Transverse colon (tissue), 4 donors: ENCODE measurements at regions of chr5 and their contacts with region 1.

Region 1: DNA sequence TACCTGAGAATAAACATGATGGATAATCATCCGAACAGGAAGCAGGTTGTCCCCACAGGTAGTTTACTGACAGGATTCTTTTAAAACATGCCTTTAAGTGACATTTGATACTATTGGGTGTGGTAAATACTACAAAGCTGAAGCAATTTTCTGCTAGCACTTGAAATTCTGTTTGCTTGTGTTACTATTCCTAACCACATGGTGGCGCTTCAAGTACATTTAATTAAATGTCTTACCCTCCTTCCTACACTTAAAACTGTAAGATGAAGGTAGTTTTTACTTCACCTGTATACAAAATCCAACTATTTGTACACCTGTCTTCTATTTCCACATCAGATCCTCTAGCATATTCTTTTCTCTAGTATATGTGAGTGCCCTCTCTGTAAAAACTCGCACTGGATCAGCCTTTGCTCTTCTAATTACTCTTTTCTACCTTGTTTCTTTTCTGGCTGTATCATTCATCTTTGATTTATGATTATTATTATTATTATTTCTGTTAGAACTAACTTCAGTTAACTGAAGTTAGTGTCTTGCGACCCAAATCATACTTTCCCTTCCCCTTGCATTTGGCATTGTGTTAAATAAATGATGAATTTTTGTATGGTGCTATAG is 18.4 kb downstream of the SLC25A46 start:
- DNase-seq: no peak
- H3K4me3 ChIP-seq: no peak overlapping the region
- H3K27ac ChIP-seq: no peak overlapping the region
- H3K4me1 ChIP-seq: no peaks in the 10 kb centered on the region
- H3K27me3 ChIP-seq: no peaks in the 10 kb centered on the region
- CTCF ChIP-seq: peak; percentile 53 to 75 (median 65)
- EP300 ChIP-seq: no peak
- POLR2A ChIP-seq: no peak

Region 2: DNA sequence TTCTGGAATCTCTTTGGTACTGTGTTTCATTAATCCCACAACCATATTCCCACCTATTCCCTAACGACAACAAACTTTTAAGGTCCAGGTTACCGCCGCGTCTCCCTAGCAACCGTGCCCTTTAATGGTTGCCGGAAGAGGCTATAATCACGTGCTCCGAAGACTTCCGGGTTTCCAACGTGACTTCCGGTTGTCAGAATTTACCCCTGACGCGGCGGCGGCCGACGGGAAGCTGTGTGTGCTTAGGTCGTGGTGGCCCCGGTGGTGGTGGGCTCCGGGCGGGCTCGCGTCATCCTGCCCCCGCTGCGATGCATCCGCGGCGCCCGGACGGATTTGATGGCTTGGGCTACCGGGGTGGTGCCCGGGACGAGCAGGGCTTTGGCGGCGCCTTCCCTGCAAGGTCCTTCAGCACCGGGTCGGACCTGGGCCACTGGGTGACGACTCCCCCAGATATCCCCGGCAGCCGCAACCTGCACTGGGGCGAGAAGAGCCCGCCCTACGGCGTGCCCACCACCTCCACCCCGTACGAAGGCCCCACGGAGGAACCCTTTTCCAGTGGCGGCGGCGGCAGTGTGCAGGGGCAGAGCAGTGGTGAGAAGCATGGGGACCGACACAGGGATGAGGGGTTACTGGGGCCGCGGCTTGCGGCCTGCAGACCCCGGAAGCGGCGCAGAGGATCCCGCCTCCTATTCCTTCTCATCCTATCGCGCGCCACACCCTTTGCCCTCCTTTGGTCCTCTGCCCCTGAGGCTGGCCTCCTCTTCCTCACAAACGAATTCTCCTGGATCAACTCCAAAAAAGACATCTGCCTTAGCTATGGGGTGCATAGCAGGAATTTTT is 18.2 kb before region 1 on chr5 and contains the start of gene SLC25A46:
- in situ Hi-C with region 1: no loop called
- intact Hi-C with region 1: no loop called
- DNase-seq: peak; percentile 90
- H3K4me3 ChIP-seq: peak within 1 kb of the TSS; percentile 62 to 98 (median 74)
- H3K27ac ChIP-seq: peak within 1 kb of the TSS; percentile 83 to 95 (median 89)
- H3K4me1 ChIP-seq: peaks cover 6 to 24% (median 14%) of the 10 kb centered on the region in 4 donors
- H3K27me3 ChIP-seq: no peaks in the 10 kb centered on the region
- CTCF ChIP-seq: no peak
- EP300 ChIP-seq: no peak
- POLR2A ChIP-seq: peak; percentile 77
- total RNA-seq, gene SLC25A46: 62.6 to 84.5 (median 72.0) TPM

Region 3: GRCh38 chr5:111072949-111073682 is 315.9 kb after region 1 on chr5:
- in situ Hi-C with region 1: loop called in 3 of 4 experiments (anchors 25 kb)
- intact Hi-C with region 1: no loop called
- DNase-seq: peak; percentile 61
- H3K4me3 ChIP-seq: peak overlapping the region; percentile 5 to 65 (median 39)
- H3K27ac ChIP-seq: peak overlapping the region in 2 of 4 donors; percentile 32 to 37
- H3K4me1 ChIP-seq: peaks cover 0 to 26% (median 8%) of the 10 kb centered on the region in 4 donors
- H3K27me3 ChIP-seq: peaks cover 66% of the 10 kb centered on the region
- CTCF ChIP-seq: no peak
- EP300 ChIP-seq: no peak
- POLR2A ChIP-seq: no peak